ENCODE measurements at regions of chr16 and their contacts with region 1.

Region 1: GRCh38 chr16:85869785-85870558 is 29.0 kb upstream of the IRF8 start:
- DNase-seq: no peak
- ATAC-seq: peak; percentile 3
- H3K4me3 Mint-ChIP-seq: peak overlapping the region; percentile 70
- H3K27ac Mint-ChIP-seq: peak overlapping the region; percentile 90
- H3K4me1 Mint-ChIP-seq: peaks cover 79% of the 10 kb centered on the region
- H3K27me3 Mint-ChIP-seq: no peaks in the 10 kb centered on the region
- CTCF ChIP-seq: no peak

Region 2: DNA sequence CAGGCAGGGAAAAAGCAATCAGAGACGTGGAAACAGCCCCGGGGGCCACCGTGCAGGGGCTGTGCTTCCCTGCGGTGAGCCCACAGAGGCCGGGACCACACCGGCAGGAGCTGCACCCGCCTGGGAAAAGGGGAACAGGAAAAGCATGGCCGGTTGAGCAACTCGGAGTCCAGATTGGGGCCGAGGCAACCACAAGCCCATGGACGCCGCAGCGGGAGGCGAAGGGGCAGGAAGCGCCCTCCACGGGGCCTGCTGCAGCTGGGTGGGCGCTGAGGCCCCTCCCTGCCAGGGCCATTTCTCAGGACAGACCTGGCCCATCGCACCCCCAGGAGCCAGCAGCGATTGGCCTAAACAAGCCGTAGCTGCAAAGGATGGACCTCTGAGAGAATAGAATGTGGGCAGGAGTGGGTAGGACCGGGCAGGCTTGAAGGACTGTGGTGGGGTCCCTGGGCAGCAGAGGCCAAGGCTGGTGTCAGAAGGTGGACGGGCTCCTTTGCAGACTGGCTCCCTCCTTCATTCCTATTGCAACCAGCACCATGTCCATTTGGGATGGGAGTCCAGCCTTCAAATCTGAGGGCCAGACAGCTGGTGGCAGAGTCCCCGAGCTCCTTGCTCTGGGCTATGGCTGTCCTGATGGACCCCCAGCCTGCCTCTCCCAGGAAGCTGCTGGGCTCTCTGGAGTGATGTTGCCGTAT is 40.1 kb before region 1 on chr16:
- CTCF ChIA-PET with region 1: interaction called, 5 read pairs
- POLR2A ChIA-PET with region 1: interaction called, 13 read pairs
- intact Hi-C with region 1: loop called (anchors 1 kb)
- DNase-seq: no peak
- ATAC-seq: no peak
- H3K4me3 Mint-ChIP-seq: peak overlapping the region; percentile 67
- H3K27ac Mint-ChIP-seq: peak overlapping the region; percentile 88
- H3K4me1 Mint-ChIP-seq: peaks cover 57% of the 10 kb centered on the region
- H3K27me3 Mint-ChIP-seq: no peaks in the 10 kb centered on the region
- CTCF ChIP-seq: no peak

Region 3: GRCh38 chr16:85853547-85854545 is 16.1 kb before region 1 on chr16:
- CTCF ChIA-PET with region 1: no interaction called
- POLR2A ChIA-PET with region 1: no interaction called
- intact Hi-C with region 1: no loop called
- DNase-seq: no peak
- ATAC-seq: no peak
- H3K4me3 Mint-ChIP-seq: no peak overlapping the region
- H3K27ac Mint-ChIP-seq: no peak overlapping the region
- H3K4me1 Mint-ChIP-seq: peaks cover 40% of the 10 kb centered on the region
- H3K27me3 Mint-ChIP-seq: no peaks in the 10 kb centered on the region
- CTCF ChIP-seq: no peak

Region 4: DNA sequence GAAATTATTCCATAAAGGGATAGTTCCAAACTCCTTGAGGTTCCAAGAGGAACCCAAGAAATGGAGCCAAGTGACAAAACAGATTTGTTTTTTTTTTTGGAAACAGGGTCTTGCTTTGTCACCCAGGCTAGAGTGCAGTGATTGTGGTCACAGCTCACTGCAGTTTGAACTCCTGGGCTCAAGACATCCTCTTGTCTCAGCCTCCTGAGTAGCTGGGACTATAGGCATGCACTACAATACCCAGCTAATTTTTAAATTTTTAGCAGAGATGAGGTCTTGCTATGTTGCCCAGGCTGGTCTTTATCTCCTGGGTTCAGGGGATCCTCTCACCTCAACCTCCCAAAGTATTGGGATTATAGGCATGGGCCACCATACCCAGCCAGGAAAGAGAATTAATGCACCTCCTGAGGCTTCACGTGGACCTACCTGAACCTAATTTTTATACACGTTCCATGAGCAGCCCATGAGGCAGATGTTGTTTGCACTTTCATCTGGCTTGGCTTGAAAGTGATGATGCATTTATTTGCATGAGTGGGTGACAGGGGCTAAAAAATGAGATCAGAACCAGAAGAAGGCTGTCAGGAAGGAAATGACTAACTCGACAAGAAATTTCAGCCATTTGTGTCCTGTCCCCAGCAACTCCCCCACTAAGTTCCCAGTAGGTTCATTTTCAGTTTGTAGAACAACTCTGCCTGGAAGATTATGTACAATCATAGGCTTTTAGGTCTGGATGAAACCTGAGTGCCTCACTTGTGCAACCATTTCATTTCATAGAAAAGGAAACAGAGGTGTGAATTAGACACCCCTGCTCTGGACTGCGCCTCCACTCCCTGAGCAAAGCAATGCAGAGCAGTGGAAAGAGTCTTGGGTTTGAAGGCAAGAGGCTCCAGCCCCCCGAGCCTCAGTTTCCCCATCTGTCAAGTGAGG is 18.7 kb after region 1 on chr16:
- CTCF ChIA-PET with region 1: no interaction called
- POLR2A ChIA-PET with region 1: interaction called, 5 read pairs
- intact Hi-C with region 1: loop called (anchors 1 kb)
- DNase-seq: no peak
- ATAC-seq: peak; percentile 90
- H3K4me3 Mint-ChIP-seq: peak overlapping the region; percentile 44
- H3K27ac Mint-ChIP-seq: peak overlapping the region; percentile 90
- H3K4me1 Mint-ChIP-seq: peaks cover 46% of the 10 kb centered on the region
- H3K27me3 Mint-ChIP-seq: no peaks in the 10 kb centered on the region
- CTCF ChIP-seq: no peak

Region 5: DNA sequence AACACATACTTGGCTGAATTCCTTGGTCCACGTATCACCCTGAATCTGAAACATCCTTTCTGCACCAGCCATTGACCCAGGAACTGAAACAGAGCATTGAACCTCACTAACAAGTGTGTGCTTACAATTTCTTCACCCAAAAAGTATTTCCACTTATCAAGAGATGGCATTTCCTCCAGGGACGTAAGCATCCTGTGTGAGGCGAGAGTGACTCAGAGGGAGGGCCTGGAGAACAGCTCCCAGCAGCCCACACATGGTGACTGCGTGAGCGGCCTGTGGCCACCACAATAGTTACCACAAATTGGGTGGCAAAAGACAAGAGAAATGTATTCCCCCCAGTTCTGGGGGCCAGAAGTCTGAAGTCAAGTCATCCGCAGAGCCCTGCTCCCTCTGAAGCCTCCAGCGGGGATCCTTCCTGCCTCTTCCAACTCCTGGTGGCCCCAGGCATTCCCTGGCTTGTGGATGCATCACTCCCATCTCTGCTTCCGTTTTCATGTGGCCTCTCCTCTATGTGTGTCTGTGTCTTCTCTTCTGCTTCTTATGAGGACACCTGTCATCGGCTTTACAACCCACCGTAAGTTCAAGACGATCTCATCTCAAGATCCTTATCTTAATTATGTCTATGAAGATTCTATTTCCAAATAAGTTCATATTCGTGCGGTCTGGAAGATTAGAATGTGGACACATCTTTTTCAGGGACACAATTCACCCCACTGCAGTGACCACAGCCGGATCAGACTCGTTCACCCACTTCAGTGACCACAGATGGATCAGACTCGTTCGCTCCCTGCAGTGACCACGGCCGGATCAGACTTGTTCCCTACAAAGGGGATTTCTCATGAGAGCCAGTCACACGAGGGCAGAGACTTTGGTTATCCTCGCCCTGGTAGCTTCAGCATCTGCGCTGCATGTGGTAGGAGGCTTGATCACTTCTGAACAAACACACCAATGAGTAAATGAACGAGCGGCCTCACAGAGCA is 517.8 kb after region 1 on chr16:
- CTCF ChIA-PET with region 1: no interaction called
- POLR2A ChIA-PET with region 1: no interaction called
- intact Hi-C with region 1: no loop called
- DNase-seq: no peak
- ATAC-seq: no peak
- H3K4me3 Mint-ChIP-seq: no peak overlapping the region
- H3K27ac Mint-ChIP-seq: no peak overlapping the region
- H3K4me1 Mint-ChIP-seq: no peaks in the 10 kb centered on the region
- H3K27me3 Mint-ChIP-seq: peaks cover 11% of the 10 kb centered on the region
- CTCF ChIP-seq: no peak

Measured in activated B cell treated with CpG ODN at 0.5 μM for 24 hours (primary cell).